Adrenal gland (tissue), 19 donors: ENCODE measurements at regions of chr14 and their contacts with region 1.

Region 1: GRCh38 chr14:95442633-95443021 is 73.8 kb downstream of the SYNE3 start:
- DNase-seq: peak; percentile 79 to 95 (median 88)
- H3K4me3 ChIP-seq: no peak overlapping the region
- H3K27ac ChIP-seq: no peak overlapping the region
- H3K4me1 ChIP-seq: no peaks in the 10 kb centered on the region
- H3K27me3 ChIP-seq: no peaks in the 10 kb centered on the region
- CTCF ChIP-seq: peak; percentile 71 to 91 (median 84)
- POLR2A ChIP-seq: no peak

Region 2: GRCh38 chr14:95527387-95528002 is 84.9 kb after region 1 on chr14:
- intact Hi-C with region 1: loop called (anchors 2 to 5 kb)
- DNase-seq: peak; percentile 69 to 89 (median 76)
- H3K4me3 ChIP-seq: no peak overlapping the region
- H3K27ac ChIP-seq: peak overlapping the region in 4 of 5 donors; percentile 52 to 81 (median 66)
- H3K4me1 ChIP-seq: peaks cover 8 to 74% of the 10 kb centered on the region in 2 donors
- H3K27me3 ChIP-seq: no peaks in the 10 kb centered on the region
- CTCF ChIP-seq: peak; percentile 80 to 91 (median 86)
- POLR2A ChIP-seq: no peak